ENCODE measurements at regions of chr7 and their contacts with region 1.

Region 1: DNA sequence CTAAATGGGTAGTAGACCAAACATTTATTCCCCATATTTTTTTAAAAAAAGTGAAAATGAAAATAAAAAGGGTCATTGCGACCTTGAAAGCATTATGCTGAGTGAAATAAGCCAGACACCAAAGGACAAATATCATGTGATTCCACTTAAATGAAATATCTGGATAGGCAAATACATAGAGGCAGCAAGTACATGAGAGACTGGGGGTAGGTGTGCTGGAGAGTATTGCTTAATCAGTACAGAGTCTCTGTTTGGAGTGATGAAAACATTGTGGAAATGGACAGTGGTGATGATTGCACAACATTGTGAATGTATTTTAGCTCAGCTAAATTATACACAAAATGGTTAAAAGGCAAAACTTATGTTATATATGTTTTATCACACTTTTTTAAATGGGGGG is 169.4 kb downstream of the AKR1D1 start:
- DNase-seq: no peak
- ATAC-seq: no peak
- H3K4me3 Mint-ChIP-seq: no peak overlapping the region
- H3K27ac Mint-ChIP-seq: no peak overlapping the region
- H3K4me1 Mint-ChIP-seq: no peaks in the 10 kb centered on the region
- H3K27me3 Mint-ChIP-seq: no peaks in the 10 kb centered on the region

Region 2: GRCh38 chr7:138097064-138097741 is 148.5 kb before region 1 on chr7:
- CTCF ChIA-PET with region 1: no interaction called
- POLR2A ChIA-PET with region 1: no interaction called
- intact Hi-C with region 1: no loop called
- DNase-seq: peak; percentile 38
- ATAC-seq: peak; percentile 16
- H3K4me3 Mint-ChIP-seq: no peak overlapping the region
- H3K27ac Mint-ChIP-seq: no peak overlapping the region
- H3K4me1 Mint-ChIP-seq: no peaks in the 10 kb centered on the region
- H3K27me3 Mint-ChIP-seq: peaks cover 8% of the 10 kb centered on the region

Region 3: DNA sequence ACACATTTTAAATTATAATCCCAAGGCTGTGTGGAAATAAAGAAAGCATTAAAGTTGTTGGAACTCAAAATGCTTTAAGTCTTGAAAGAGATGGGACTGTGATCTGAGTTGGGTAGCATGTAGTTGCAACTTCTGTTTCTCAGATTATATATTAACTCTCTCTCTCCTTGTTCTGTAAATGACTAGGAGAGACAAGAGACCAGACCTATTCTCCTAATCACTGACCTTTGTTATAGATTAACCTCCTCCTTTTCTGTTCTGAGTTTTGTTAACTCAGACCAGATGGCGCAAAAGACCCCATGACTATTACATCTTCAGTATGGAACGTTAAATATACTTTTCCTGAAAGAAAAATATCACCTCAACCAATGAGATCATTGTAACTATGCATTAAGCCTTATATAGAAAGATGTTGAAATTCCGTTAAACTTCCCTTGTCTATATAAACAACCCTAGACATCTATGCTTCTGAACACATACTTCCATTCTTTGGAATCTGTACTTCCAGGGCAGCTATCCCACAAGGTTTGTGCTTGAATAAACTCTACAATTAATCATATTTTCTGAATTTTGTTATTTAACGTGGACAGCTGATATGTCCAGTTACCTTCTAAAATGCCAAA is 70.8 kb after region 1 on chr7:
- CTCF ChIA-PET with region 1: no interaction called
- POLR2A ChIA-PET with region 1: no interaction called
- intact Hi-C with region 1: loop called in 1 of 2 experiments (anchors 2 kb)
- DNase-seq: no peak
- ATAC-seq: no peak
- H3K4me3 Mint-ChIP-seq: no peak overlapping the region
- H3K27ac Mint-ChIP-seq: no peak overlapping the region
- H3K4me1 Mint-ChIP-seq: no peaks in the 10 kb centered on the region
- H3K27me3 Mint-ChIP-seq: no peaks in the 10 kb centered on the region

Measured in activated CD4-positive, alpha-beta T cell treated with anti-CD3 and anti-CD28 coated beads for 36 hours (primary cell).